ENCODE measurements at regions of chr5 and their contacts with region 1.

Region 1: DNA sequence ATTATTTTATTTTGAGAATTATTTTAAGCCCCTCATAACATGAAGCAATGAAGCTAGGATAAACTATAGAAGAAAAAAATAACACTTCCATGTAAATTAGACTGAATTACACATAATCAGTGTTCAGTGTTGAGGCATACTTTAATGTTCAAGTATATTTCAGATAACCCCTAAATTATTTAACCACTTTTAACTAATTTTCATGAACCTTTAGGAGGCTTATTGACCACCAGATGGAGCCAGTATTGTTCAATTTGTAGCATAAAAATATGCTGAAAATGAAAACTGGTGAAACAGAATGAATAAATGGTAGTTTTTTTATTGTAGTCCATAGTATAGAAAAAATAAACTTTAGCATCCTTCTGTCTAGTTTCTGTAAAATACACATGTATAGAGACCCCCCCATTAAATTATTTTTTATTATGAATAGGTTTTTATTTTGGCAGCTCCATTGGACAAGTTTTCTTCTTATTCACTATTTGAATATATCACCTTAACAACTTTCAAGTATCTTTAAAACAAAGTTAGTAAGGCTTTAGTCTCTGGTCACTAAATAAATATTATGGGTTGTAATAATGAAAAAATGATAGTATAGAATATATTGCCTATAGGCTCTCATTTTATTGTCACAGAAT is 190.1 kb downstream of the CWC27 start:
- DNase-seq: peak in 4 of 5 donors; percentile 6 to 21 (median 11)
- H3K4me3 ChIP-seq: no peak overlapping the region
- H3K4me3 Mint-ChIP-seq: no peak overlapping the region
- H3K27ac ChIP-seq: no peak overlapping the region
- H3K27ac Mint-ChIP-seq: no peak overlapping the region
- H3K4me1 ChIP-seq: no peaks in the 10 kb centered on the region
- H3K4me1 Mint-ChIP-seq: no peaks in the 10 kb centered on the region
- H3K27me3 ChIP-seq: no peaks in the 10 kb centered on the region
- H3K27me3 Mint-ChIP-seq: no peaks in the 10 kb centered on the region

Region 2: DNA sequence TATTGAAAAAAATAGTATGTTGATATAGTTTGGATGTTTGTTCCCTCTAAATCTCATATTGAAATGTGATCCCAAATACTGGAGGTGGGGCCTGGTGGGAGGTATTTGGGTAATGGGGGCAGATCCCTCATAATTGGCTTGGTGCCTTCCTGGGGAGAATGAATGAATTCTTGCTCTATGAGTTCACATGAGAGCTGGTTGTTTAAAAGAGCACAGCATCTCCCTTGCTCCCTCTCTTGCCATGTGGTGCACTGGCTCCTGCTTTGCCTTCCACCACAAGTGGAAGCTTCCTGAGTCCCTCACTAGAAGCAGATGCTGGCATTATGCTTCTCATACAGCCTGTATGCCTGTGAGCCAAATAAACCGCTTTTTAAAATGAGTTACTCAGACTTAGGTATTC is 368.0 kb after region 1 on chr5:
- CTCF ChIA-PET with region 1: no interaction called
- POLR2A ChIA-PET with region 1: no interaction called
- intact Hi-C with region 1: no loop called
- DNase-seq: no peak
- H3K4me3 ChIP-seq: no peak overlapping the region
- H3K4me3 Mint-ChIP-seq: no peak overlapping the region
- H3K27ac ChIP-seq: no peak overlapping the region
- H3K27ac Mint-ChIP-seq: no peak overlapping the region
- H3K4me1 ChIP-seq: no peaks in the 10 kb centered on the region
- H3K4me1 Mint-ChIP-seq: no peaks in the 10 kb centered on the region
- H3K27me3 ChIP-seq: no peaks in the 10 kb centered on the region
- H3K27me3 Mint-ChIP-seq: no peaks in the 10 kb centered on the region

Region 3: GRCh38 chr5:65356282-65356681 is 397.4 kb after region 1 on chr5:
- CTCF ChIA-PET with region 1: no interaction called
- POLR2A ChIA-PET with region 1: no interaction called
- intact Hi-C with region 1: loop called (anchors 5 kb)
- DNase-seq: no peak
- H3K4me3 ChIP-seq: no peak overlapping the region
- H3K4me3 Mint-ChIP-seq: no peak overlapping the region
- H3K27ac ChIP-seq: no peak overlapping the region
- H3K27ac Mint-ChIP-seq: no peak overlapping the region
- H3K4me1 ChIP-seq: no peaks in the 10 kb centered on the region
- H3K4me1 Mint-ChIP-seq: no peaks in the 10 kb centered on the region
- H3K27me3 ChIP-seq: no peaks in the 10 kb centered on the region
- H3K27me3 Mint-ChIP-seq: no peaks in the 10 kb centered on the region

Measured in CD4-positive, alpha-beta memory T cell (primary cell).